K562 (cell line): ENCODE measurements at regions of chr7 and their contacts with region 1.

Region 1: GRCh38 chr7:99126921-99127553 is 16.9 kb downstream of the SMURF1 start:
- DNase-seq: peak; percentile 30 to 76 (median 44)
- ATAC-seq: peak; percentile 77
- H3K4me3 ChIP-seq: peak overlapping the region; percentile 7; the same call in 1 of the 2 replicates
- H3K27ac ChIP-seq: peak overlapping the region; percentile 69
- H3K4me1 ChIP-seq: peaks cover 12 to 52% of the 10 kb centered on the region in 2 experiments; a peak in 4 of 5 replicates
- H3K27me3 ChIP-seq: no peaks in the 10 kb centered on the region
- CTCF ChIP-seq: no peak
- EP300 ChIP-seq: peak; percentile 37; the same call in 1 of the 2 replicates
- POLR2A ChIP-seq: no peak
- RAD21 ChIP-seq: no peak; a peak in 1 of 4 replicates

Region 2: DNA sequence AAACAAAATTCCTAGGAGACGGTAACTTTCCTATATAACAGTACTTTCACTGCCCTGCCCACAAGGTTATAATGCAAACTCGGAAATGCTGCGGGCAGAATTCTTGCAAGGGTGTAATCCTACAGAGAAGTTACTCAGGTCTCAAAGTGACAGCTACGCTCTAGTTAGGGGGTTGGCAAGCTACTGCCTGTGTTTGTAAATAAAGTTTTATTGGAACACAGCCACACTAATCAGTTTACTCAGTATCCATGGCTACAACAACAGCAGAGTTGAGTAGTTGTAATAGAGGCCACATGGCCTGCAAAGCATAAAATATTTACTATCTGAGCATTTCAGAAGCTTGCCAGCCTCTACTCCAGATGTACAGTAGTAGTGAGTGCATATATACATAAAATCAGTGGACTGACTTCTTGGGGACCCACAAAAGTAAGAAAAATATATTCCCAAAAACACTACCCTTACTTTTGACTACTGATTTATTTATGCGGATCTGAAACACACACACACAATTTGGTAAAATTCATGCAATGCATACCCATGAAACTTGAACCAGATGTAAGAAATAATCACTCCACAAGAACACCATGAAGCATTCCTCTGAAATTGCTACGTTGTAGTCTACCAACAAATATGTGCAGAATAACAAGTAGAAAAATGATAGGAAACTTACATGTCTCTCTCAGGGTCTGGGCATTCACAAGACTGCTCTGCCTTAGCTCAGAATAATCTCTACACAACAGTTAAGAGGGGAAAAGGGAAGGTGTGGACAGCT is 36.1 kb before region 1 on chr7:
- CTCF ChIA-PET with region 1: no interaction called
- POLR2A ChIA-PET with region 1: interaction called, 7 read pairs
- in situ Hi-C with region 1: no loop called
- intact Hi-C with region 1: loop called (anchors 5 kb)
- DNase-seq: peak in 2 of 4 experiments; percentile 29 to 30
- ATAC-seq: peak; percentile 47
- H3K4me3 ChIP-seq: no peak overlapping the region
- H3K27ac ChIP-seq: no peak overlapping the region; the same call in 2 of the 3 replicates
- H3K4me1 ChIP-seq: peaks cover 12 to 27% of the 10 kb centered on the region in 2 experiments; a peak in 4 of 5 replicates
- H3K27me3 ChIP-seq: no peaks in the 10 kb centered on the region
- CTCF ChIP-seq: no peak
- EP300 ChIP-seq: no peak
- POLR2A ChIP-seq: no peak
- RAD21 ChIP-seq: no peak

Region 3: DNA sequence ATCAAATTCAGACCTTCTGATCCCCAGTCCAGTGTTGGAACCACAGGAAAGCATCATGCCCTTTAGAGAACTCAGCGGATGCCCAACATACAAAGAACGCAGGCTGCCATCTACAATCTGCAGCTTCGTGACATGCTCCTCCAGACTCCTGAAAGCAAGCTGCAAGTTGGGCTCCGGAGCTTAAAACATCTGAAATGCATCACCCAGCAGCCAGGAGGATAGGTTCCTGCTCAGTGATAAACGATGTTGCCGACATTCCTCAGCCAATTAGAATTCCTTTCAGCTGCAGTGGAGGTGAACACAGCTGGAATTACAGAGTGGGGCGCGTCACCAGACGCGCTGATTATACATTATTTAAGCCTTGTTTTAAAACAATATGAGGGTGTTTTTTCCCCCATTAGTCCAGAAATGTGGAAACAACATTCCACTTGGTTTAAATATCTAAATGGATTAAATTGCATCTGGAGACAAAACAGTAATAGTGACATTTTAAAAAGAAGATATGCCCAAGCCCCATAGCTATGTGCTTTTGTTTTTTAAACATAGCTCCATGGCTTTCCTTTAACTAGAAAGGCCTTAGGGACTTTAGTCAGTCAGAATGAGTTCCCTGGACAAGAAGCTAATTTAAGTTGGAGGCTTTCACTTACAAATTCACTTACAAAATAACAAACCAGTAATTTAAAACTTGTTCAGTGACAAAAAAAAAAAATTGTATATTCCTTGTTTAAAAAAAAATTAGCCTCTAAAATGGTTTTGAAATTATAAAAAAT is 10.6 kb after region 1 on chr7:
- CTCF ChIA-PET with region 1: no interaction called
- POLR2A ChIA-PET with region 1: interaction called, 12 read pairs
- in situ Hi-C with region 1: no loop called
- intact Hi-C with region 1: no loop called
- DNase-seq: no peak
- ATAC-seq: no peak
- H3K4me3 ChIP-seq: no peak overlapping the region
- H3K27ac ChIP-seq: no peak overlapping the region
- H3K4me1 ChIP-seq: peaks cover 14 to 25% of the 10 kb centered on the region in 2 experiments
- H3K27me3 ChIP-seq: no peaks in the 10 kb centered on the region
- CTCF ChIP-seq: no peak
- EP300 ChIP-seq: no peak
- POLR2A ChIP-seq: no peak
- RAD21 ChIP-seq: no peak

Region 4: GRCh38 chr7:99143853-99144672 is 17.0 kb after region 1 on chr7 and contains the start of gene SMURF1:
- CTCF ChIA-PET with region 1: no interaction called
- POLR2A ChIA-PET with region 1: interaction called, 12 read pairs
- in situ Hi-C with region 1: no loop called
- intact Hi-C with region 1: no loop called
- DNase-seq: peak; percentile 83 to 92 (median 89)
- ATAC-seq: peak; percentile 55
- H3K4me3 ChIP-seq: peak within 1 kb of the TSS; percentile 75
- H3K27ac ChIP-seq: peak within 1 kb of the TSS; percentile 91
- H3K4me1 ChIP-seq: peaks cover 10 to 18% of the 10 kb centered on the region in 2 experiments; a peak in 4 of 5 replicates
- H3K27me3 ChIP-seq: no peaks in the 10 kb centered on the region
- CTCF ChIP-seq: no peak
- EP300 ChIP-seq: no peak
- POLR2A ChIP-seq: peak; percentile 86
- RAD21 ChIP-seq: peak; percentile 13 to 15; a peak in 2 of 4 replicates
- polyA plus RNA-seq, gene SMURF1: 1.0 to 1.3 TPM